Activated CD4-positive, alpha-beta memory T cell treated with anti-CD3 and anti-CD28 coated beads for 36 hours (primary cell): ENCODE measurements at regions of chr3 and their contacts with region 1.

Region 1: GRCh38 chr3:172595641-172596393 is 72.6 kb upstream of the TNFSF10 start:
- DNase-seq: peak; percentile 40
- H3K4me3 Mint-ChIP-seq: peak overlapping the region; percentile 79
- H3K27ac Mint-ChIP-seq: peak overlapping the region; percentile 70
- H3K4me1 Mint-ChIP-seq: peaks cover 53% of the 10 kb centered on the region
- H3K27me3 Mint-ChIP-seq: peaks cover 5% of the 10 kb centered on the region

Region 2: DNA sequence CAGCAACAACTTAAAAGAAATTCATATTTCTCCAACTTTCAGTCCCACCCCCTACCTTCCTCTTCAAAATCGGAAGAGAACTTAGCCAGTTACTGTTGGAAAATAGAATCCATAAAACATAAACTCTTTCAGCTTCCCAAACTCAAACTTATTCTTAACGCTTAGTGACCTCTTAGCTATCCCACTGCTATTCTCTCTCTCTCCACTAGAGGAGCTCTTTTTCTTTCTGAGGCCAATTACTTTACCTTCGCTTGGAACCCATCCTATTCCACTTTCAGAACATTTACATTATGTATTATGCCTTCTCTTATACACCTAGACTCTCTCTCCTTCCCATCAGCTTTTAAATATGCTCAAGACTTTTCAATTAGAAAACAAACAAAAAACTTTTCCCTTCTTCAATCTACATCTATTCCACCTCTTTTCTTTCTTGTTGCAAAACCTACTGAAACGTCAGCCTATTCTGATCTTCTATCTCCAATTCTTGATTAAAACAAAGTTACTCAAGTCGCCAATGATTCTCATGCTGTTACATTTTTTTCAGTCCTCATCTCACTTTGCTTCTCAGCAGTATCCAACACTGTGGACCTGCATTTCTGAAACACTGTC is 134.2 kb before region 1 on chr3:
- CTCF ChIA-PET with region 1: interaction called, 33 read pairs
- POLR2A ChIA-PET with region 1: interaction called, 3 read pairs
- intact Hi-C with region 1: loop called (anchors 1 kb)
- DNase-seq: no peak
- H3K4me3 Mint-ChIP-seq: no peak overlapping the region
- H3K27ac Mint-ChIP-seq: no peak overlapping the region
- H3K4me1 Mint-ChIP-seq: no peaks in the 10 kb centered on the region
- H3K27me3 Mint-ChIP-seq: no peaks in the 10 kb centered on the region

Region 3: GRCh38 chr3:172511783-172512762 is 83.7 kb before region 1 on chr3:
- CTCF ChIA-PET with region 1: interaction called, 75 read pairs
- POLR2A ChIA-PET with region 1: interaction called, 8 read pairs
- intact Hi-C with region 1: loop called (anchors 1 kb)
- DNase-seq: peak; percentile 89
- H3K4me3 Mint-ChIP-seq: peak overlapping the region; percentile 52
- H3K27ac Mint-ChIP-seq: peak overlapping the region; percentile 93
- H3K4me1 Mint-ChIP-seq: peaks cover 81% of the 10 kb centered on the region
- H3K27me3 Mint-ChIP-seq: no peaks in the 10 kb centered on the region

Region 4: DNA sequence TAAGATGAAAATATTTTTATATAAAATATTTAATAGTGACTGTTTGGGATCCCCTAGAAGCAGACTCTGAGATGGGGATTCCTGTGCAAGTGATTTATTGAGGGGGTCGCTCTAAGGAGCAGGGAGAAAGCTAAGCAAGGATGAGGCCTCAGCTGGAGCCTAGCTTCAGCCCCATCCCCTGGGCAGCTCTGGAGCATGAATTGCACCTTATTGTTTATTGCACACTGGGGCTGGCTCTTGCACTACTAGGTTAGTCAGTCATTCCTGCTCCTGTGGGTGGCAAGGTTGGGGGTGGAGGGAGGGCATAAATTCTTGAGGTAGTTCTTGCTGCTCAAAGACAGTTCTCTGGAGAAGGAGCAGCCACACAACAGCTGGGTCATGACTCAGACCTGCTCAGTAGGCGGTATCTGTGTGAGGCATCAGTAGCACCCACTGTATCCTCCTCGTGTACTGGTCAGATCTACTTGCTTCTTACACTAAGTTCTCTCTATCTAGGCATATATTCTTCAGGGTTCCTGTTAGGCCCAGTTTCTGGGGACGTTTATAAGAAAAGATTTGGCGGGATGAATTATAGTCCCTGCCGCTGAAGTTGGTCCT is 45.4 kb before region 1 on chr3:
- CTCF ChIA-PET with region 1: interaction called, 5 read pairs
- POLR2A ChIA-PET with region 1: no interaction called
- intact Hi-C with region 1: loop called (anchors 1 kb)
- DNase-seq: peak; percentile 91
- H3K4me3 Mint-ChIP-seq: no peak overlapping the region
- H3K27ac Mint-ChIP-seq: peak overlapping the region; percentile 52
- H3K4me1 Mint-ChIP-seq: peaks cover 32% of the 10 kb centered on the region
- H3K27me3 Mint-ChIP-seq: no peaks in the 10 kb centered on the region

Region 5: GRCh38 chr3:172607305-172608121 is 11.7 kb after region 1 on chr3:
- CTCF ChIA-PET with region 1: interaction called, 41 read pairs
- POLR2A ChIA-PET with region 1: interaction called, 3 read pairs
- intact Hi-C with region 1: no loop called
- DNase-seq: no peak
- H3K4me3 Mint-ChIP-seq: no peak overlapping the region
- H3K27ac Mint-ChIP-seq: no peak overlapping the region
- H3K4me1 Mint-ChIP-seq: peaks cover 9% of the 10 kb centered on the region
- H3K27me3 Mint-ChIP-seq: no peaks in the 10 kb centered on the region

Region 6: GRCh38 chr3:172666873-172667694 is 71.3 kb after region 1 on chr3:
- CTCF ChIA-PET with region 1: interaction called, 20 read pairs
- POLR2A ChIA-PET with region 1: no interaction called
- intact Hi-C with region 1: loop called (anchors 1 kb)
- DNase-seq: peak; percentile 82
- H3K4me3 Mint-ChIP-seq: no peak overlapping the region
- H3K27ac Mint-ChIP-seq: no peak overlapping the region
- H3K4me1 Mint-ChIP-seq: peaks cover 14% of the 10 kb centered on the region
- H3K27me3 Mint-ChIP-seq: no peaks in the 10 kb centered on the region